Panc1 (cell line): ENCODE measurements at regions of chr13 and their contacts with region 1.

Region 1: GRCh38 chr13:74026753-74027152 is 107.5 kb downstream of the KLF12 start:
- DNase-seq: no peak
- ATAC-seq: no peak
- H3K4me3 ChIP-seq: no peak overlapping the region
- H3K27ac ChIP-seq: no peak overlapping the region
- H3K4me1 ChIP-seq: no peaks in the 10 kb centered on the region
- H3K27me3 ChIP-seq: no peaks in the 10 kb centered on the region
- CTCF ChIP-seq: no peak

Region 2: DNA sequence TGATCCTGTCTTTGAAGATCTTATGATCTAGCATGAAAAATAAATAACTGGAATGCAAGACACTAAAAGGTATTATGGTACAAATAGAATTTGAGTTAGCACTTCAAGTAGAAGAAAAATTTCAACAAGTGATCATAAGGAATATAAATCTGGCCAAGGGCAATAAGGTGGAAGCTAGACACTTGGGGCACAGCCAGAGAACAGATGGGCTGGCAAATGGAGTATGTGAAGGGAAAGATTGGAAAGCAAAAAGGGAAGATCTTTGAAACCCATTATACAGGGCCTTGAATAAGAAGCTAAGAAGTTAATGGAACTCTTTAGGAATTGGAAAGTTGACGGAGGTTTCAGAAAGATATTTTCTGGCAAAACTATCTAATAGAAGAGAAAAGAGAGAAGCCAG is 1360.4 kb before region 1 on chr13:
- CTCF ChIA-PET with region 1: no interaction called
- POLR2A ChIA-PET with region 1: no interaction called
- in situ Hi-C with region 1: no loop called
- intact Hi-C with region 1: loop called (anchors 10 kb)
- DNase-seq: no peak
- ATAC-seq: no peak
- H3K4me3 ChIP-seq: no peak overlapping the region
- H3K27ac ChIP-seq: no peak overlapping the region
- H3K4me1 ChIP-seq: no peaks in the 10 kb centered on the region
- H3K27me3 ChIP-seq: no peaks in the 10 kb centered on the region
- CTCF ChIP-seq: no peak